ENCODE measurements at regions of chr6 and their contacts with region 1.

Region 1: DNA sequence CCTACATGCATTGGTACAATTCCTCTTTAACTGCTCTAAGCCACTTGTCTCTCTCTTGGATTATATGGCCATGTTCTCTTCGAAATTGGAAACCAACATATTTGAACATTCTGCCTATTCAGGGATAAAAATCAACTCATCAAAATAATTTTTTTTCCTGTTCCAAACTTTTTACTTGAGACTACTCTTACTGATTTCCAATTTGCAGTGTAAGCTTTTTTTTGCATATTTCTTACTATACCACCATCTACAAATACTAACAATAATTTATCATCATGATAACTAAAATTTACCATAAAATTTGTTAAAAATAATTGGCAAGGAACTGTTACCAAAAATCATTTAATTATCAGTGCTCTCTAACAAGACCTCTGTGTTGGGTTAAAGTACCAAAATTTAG is 6.9 kb upstream of the FAM162B start:
- H3K4me3 ChIP-seq: no peak overlapping the region
- H3K27ac ChIP-seq: no peak overlapping the region
- H3K4me1 ChIP-seq: no peaks in the 10 kb centered on the region
- CTCF ChIP-seq: no peak

Region 2: DNA sequence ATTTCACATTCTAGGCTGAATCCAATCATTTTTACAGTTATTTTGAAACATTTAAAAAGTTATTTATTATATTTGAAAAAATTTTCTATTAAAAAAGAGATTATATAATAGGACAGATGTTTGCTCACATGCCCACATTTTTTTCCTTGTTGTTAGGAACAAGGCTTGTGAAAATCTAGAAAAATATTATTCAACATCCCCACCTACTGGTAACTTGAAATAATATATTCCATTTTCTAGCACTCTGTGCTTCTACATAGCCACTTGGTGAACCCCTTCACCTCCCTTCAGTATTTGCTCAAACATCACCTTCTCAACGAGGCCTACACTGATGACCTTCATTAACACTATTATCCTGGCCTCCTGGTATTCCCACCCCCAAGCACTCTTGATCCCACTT is 74.8 kb after region 1 on chr6:
- CTCF ChIA-PET with region 1: interaction called, 16 read pairs
- POLR2A ChIA-PET with region 1: no interaction called
- H3K4me3 ChIP-seq: no peak overlapping the region
- H3K27ac ChIP-seq: no peak overlapping the region
- H3K4me1 ChIP-seq: no peaks in the 10 kb centered on the region
- CTCF ChIP-seq: 0 out of 2 replicates have a peak, but pooled peaks have one; percentile 24

Measured in HEK293 (cell line).